ENCODE measurements at regions of chr1 and their contacts with region 1.

Region 1: DNA sequence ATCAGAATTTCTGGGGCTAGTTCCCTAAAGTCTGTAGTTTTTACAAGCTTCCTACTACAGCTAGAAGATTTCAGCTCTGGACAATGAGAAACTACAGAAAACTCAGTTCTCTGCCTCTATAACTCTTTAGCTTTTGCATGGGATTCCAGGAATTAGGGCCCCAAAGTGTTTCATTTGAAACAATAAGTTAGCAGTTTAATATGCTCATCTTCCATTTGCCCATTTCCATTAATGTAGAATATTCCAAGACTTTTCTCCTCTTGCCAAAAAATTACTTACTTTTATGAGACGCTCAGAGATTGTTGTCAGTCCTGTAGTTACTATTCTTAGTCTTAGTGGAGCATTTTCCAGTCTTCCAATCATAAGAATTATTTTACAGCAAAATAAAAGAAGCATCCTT is 719.9 kb downstream of the ADGRL2 start:
- DNase-seq: no peak
- H3K4me3 ChIP-seq: no peak overlapping the region
- H3K27ac ChIP-seq: no peak overlapping the region
- H3K4me1 ChIP-seq: no peaks in the 10 kb centered on the region
- H3K27me3 ChIP-seq: no peaks in the 10 kb centered on the region
- CTCF ChIP-seq: no peak
- POLR2A ChIP-seq: no peak

Region 2: DNA sequence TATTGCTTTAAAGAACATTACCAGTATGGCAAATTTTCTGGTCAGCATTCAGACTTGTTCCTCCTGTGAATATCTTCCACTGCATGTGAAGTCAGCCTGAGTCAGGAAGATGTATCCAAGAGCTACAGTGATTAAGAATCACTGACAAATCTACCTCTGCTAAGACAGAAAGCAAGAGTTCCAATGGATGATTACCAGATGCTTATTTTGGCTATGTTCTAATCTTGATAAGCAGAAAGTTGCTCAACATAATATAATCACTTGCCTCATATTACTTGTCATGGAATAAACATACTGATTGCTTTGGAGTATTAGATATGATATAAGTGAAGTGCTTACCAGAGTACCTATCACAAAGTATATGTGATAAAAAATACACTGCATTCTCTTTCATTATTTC is 18.3 kb after region 1 on chr1:
- intact Hi-C with region 1: no loop called
- DNase-seq: no peak
- H3K4me3 ChIP-seq: no peak overlapping the region
- H3K27ac ChIP-seq: no peak overlapping the region
- H3K4me1 ChIP-seq: no peaks in the 10 kb centered on the region
- H3K27me3 ChIP-seq: no peaks in the 10 kb centered on the region
- CTCF ChIP-seq: no peak
- POLR2A ChIP-seq: no peak

Region 3: DNA sequence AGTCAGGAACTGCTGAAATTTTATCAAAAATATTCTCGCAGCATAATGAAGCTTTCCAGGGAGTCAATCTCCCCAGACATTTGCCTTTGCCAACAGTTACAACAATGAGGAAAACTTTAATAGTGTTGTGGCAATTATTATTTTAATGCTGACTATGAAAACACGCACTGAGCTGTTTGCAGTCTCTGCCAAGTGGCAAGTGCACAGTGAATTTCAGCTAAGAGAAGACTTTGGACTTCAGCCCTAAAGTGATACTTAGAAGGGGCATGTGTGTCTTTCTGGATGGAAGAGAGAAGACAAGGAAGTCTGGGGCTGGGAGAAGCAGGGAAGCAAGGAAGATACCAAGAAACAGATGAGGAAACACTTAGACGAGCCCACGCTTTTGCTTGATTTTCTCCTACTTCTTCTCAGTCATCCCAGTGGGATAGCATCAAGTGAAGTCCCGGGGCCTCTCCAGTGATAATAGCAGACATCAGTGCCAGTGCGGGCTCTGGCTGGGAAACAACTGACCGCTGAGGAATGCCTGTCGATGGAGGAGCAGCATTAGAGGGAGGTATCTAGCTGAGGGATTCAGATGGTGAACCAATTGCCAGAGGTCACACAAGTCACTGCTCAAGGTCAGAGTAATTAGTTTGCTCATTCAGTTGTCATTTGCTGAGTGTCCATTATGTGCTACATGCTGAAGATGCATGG is 1282.0 kb after region 1 on chr1:
- intact Hi-C with region 1: loop called (anchors 5 kb)
- DNase-seq: no peak
- H3K4me3 ChIP-seq: no peak overlapping the region
- H3K27ac ChIP-seq: no peak overlapping the region
- H3K4me1 ChIP-seq: no peaks in the 10 kb centered on the region
- H3K27me3 ChIP-seq: no peaks in the 10 kb centered on the region
- CTCF ChIP-seq: no peak
- POLR2A ChIP-seq: no peak

Measured in breast epithelium (tissue), 4 donors.